Right ventricle myocardium superior (tissue), 1 donor: ENCODE measurements at regions of chr3 and their contacts with region 1.

Region 1: DNA sequence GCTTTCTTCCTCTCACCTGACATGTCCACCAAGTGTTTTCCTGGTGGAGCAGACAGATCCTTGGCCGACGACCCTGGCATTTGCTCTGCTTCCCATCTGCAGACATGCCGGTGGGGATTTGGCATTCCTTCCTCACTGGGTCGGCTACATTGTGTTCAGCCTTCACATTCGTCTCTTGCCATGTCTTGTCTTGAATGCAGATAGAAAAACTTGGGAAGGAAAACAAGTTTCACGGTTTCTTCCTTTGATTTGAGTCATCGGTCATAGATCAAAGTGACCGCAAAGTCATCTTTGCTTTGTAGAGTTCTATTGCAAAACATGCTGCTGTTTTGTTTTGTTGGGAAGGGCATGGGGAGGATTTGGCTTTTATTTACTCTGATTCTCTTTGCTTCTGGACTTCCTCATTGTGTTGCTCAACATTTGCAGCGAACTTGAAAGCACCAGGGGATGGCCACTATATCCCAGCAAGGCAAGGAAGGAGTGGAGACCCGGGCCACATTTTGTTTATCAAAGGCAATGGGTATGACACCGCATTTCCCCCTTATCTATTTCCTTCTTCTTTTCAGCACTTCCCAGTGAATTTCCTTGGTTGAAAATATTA is 321.3 kb downstream of the CACNA2D3 start:
- DNase-seq: no peak
- ATAC-seq: peak; percentile 61

Region 2: DNA sequence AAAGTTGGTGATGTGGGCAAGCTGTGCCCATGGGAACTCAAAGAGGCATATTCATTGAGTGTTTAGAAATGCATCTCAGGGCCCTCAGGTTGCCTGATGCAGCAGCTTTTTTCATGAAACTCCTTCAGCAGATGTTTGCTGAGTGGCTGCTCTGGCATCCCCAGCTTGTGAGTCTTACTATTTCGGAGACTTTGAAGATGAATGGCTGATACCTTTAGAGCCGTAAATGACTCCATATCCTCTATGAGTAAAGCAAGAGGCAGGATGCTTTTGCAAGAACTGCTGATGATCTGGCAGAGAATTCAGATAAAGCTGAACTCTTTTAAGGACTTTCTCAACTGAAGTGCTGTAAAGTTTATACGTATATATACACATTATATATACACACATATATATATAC is 62.9 kb after region 1 on chr3:
- intact Hi-C with region 1: loop called (anchors 10 kb)
- DNase-seq: no peak
- ATAC-seq: no peak

Region 3: DNA sequence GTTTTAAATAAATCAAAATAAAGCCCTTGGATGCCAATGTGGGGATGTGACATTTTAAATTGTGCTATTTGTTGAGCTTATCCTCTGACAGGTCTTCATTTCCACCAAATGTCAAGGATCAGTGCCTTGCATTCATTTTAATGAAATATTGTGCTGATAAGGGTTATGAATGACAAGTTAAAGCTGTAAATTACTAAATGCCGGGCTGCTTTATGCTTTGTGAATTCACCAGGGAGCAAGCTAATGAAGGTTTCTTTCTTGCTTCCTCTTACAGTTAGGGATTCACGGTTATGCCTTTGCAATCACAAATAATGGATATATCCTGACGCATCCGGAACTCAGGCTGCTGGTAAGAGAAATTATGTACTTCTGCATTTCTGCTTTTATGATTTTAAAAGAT is 402.5 kb after region 1 on chr3:
- intact Hi-C with region 1: loop called (anchors 10 kb)
- DNase-seq: no peak
- ATAC-seq: no peak